Common myeloid progenitor, CD34-positive (primary cell): ENCODE measurements at regions of chr1 and their contacts with region 1.

Region 1: GRCh38 chr1:60949154-60949825 is 133.1 kb upstream of the NFIA start:
- DNase-seq: peak; percentile 83 to 98 (median 97)
- H3K4me3 ChIP-seq: peak overlapping the region in 3 of 7 experiments; percentile 21 to 32 (median 24)
- H3K27ac ChIP-seq: no peak overlapping the region
- H3K4me1 ChIP-seq: peaks cover 17 to 27% (median 20%) of the 10 kb centered on the region in 4 experiments
- H3K27me3 ChIP-seq: no peaks in the 10 kb centered on the region

Region 2: DNA sequence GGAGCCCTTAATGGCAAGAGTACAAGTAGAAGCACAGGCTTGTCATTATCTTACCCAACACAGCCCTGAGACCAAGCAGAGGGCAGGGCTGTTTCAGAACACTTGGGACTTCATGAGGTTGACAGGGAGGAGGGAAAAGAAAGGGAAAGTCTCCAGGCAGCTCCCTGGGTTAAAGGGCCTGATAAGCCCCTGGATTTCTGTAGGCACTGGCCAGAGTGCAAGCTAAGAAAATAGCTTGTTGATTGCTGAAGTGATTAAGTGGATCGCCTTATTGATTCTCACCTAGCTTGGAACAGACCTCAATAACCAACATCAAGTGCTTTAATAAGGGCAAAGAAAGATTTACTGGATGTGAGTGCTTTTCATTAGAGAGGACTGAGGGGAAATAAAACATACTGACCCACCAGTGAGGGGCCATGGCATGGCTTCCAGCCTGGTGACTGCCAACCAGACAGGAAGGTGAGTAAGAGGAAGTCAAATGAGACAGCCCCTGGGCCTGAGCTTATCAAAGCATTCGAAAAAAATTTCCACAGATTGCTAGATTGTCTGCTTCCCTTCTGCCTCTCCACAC is 11.7 kb after region 1 on chr1:
- CTCF ChIA-PET with region 1: interaction called, 12 read pairs
- POLR2A ChIA-PET with region 1: no interaction called
- DNase-seq: peak; percentile 35 to 84 (median 65)
- H3K4me3 ChIP-seq: peak overlapping the region in 1 of 7 experiments; percentile 22
- H3K27ac ChIP-seq: peak overlapping the region in 1 of 2 experiments; percentile 26
- H3K4me1 ChIP-seq: peaks cover 7 to 39% (median 22%) of the 10 kb centered on the region in 4 experiments
- H3K27me3 ChIP-seq: no peaks in the 10 kb centered on the region